HepG2 (cell line): ENCODE measurements at regions of chr1 and their contacts with region 1.

Region 1: DNA sequence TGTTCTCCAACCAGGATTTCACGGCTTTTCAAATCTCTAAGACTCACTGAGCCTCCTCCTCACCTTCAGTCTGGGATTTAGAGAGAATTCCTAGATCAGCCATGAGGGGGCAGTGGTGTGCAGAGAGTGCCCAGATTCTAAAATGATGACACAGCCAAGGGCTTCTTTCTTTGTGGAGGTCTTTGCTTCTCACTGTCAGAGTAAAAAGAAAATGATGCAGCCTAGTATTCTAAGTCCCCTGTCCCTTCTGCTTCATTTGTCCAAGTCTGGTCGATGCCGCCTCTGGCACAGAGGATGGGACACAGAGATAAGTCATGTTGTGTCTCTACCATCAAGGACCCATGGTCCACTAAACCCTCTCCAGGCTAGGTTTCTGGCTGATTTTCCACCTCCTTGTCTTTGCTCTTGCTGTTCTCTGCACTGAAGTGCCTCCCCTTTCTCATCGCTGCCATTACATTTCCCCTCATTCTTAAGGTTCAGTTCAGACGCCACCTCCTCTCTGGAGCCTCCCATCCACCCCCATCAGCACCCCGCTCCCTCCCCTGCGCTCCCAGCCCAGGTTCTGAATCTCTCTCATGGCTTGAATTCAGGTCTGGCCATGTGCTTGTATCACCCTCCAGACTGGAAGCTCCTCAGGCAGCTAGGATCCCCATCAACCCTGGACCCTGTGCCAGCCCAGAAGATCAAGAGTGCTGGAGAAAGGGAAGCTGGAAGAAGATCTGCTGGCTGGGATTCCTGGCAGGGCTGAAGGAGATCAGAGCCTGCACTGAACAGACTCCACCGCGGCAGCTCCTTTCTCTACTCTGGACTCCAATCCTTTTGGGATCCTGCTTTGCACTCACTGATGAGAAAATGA is 12.0 kb upstream of the TINAGL1 start:
- DNase-seq: peak; percentile 48
- ATAC-seq: peak; percentile 78
- H3K4me3 ChIP-seq: no peak overlapping the region
- H3K27ac ChIP-seq: no peak overlapping the region
- H3K4me1 ChIP-seq: peaks cover 46% of the 10 kb centered on the region
- H3K27me3 ChIP-seq: no peaks in the 10 kb centered on the region
- CTCF ChIP-seq: peak; percentile 88
- EP300 ChIP-seq: no peak
- POLR2A ChIP-seq: no peak
- RAD21 ChIP-seq: peak; percentile 88

Region 2: DNA sequence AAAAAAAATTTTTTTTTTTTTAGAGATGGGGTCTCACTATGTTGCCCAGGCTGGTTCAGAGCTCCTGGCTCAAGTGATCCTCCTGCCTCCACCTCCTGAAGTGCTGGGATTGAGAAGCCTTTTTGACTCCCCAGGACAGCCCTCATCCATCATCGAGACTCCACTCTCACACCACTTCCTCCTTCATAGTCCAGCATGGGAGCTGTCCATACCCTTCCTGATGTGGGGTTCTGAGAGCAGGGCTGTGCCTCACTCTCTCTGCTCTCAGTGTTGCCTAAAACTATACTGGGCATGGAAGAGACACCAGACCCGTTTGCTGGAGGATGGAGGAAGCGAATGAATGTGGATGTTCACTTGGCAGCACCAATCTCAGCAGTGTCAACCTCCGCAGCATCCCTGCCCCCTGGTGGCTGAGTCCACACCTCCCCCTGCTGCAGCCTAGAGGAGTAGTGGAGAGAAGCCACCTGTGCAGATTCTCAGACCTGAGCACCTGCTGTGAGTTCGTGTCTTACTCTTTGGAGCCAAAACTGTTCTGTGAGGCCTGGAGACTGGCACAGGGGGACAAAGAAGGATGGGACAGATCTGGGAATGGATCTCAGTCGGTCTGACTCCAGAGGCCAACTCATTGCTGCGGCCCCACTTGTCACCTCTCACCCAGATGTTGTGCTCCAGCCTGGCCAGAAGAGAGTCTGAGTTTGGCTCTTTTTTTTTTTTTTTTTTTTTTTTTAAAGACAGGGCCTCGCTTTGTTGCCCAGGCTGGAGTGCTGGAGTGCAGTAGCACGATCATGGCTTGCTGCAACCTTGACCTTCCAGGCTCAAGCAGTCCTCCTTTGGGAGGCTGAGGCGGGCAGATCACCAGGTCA is 29.6 kb after region 1 on chr1:
- CTCF ChIA-PET with region 1: interaction called, 106 read pairs
- POLR2A ChIA-PET with region 1: interaction called, 3 read pairs
- in situ Hi-C with region 1: loop called (anchors 5 kb)
- intact Hi-C with region 1: loop called (anchors 1 kb)
- DNase-seq: peak; percentile 62
- ATAC-seq: peak; percentile 97
- H3K4me3 ChIP-seq: no peak overlapping the region
- H3K27ac ChIP-seq: no peak overlapping the region
- H3K4me1 ChIP-seq: no peaks in the 10 kb centered on the region
- H3K27me3 ChIP-seq: peaks cover 0 to 9% of the 10 kb centered on the region in 2 experiments; a peak in 1 of 5 replicates
- CTCF ChIP-seq: peak; percentile 98
- EP300 ChIP-seq: no peak
- POLR2A ChIP-seq: no peak
- RAD21 ChIP-seq: peak; percentile 91

Region 3: GRCh38 chr1:31617917-31618660 is 53.7 kb after region 1 on chr1:
- CTCF ChIA-PET with region 1: interaction called, 17 read pairs
- POLR2A ChIA-PET with region 1: no interaction called
- in situ Hi-C with region 1: no loop called
- intact Hi-C with region 1: loop called (anchors 2 kb)
- DNase-seq: peak; percentile 19
- ATAC-seq: peak; percentile 77
- H3K4me3 ChIP-seq: peak overlapping the region; percentile 59 to 72 (median 65)
- H3K27ac ChIP-seq: no peak overlapping the region
- H3K4me1 ChIP-seq: peaks cover 9% of the 10 kb centered on the region; the same call in 1 of the 2 replicates
- H3K27me3 ChIP-seq: peaks cover 7 to 42% of the 10 kb centered on the region in 2 experiments
- CTCF ChIP-seq: peak; percentile 82
- EP300 ChIP-seq: no peak
- POLR2A ChIP-seq: no peak
- RAD21 ChIP-seq: peak; percentile 66